Colonic mucosa (tissue), 4 donors: ENCODE measurements at regions of chr12 and their contacts with region 1.

Region 1: DNA sequence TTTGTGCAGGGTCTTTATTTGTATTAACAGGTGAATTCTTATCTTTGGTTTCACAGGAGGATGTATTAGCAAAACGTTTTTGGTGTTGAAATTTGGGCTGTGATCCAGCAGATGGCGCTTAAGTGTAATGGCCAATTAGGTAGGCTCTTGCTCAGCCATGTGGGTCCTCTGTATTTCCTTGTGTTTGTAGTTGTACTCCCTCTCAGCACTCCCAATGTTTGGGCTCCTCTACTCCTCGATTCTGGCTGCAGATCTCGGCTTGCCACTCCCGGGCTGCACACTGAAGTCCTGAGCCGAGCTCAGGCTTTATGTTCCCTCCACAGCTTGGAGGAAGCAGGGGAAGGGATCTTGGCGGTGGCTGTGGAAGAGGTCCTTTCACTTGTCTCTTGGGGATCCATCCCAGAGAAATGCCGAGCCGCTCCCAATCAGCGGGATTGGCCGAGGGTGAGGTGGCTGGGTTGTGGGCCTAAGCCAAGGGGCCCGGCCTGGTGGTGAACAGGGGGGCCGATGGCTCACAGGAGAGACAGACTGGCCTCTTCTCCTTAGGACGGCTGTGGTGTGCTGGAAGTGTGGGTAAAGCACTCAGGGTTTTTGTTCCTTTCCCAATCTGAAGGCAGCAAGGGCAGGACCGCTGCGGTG is 133.7 kb downstream of the AEBP2 start:
- DNase-seq: peak; percentile 34
- H3K4me3 ChIP-seq: no peak overlapping the region
- H3K27ac ChIP-seq: no peak overlapping the region
- H3K4me1 ChIP-seq: no peaks in the 10 kb centered on the region
- H3K27me3 ChIP-seq: no peaks in the 10 kb centered on the region
- CTCF ChIP-seq: peak; percentile 19

Region 2: GRCh38 chr12:19529951-19530635 is 42.9 kb before region 1 on chr12:
- intact Hi-C with region 1: no loop called
- DNase-seq: no peak
- H3K4me3 ChIP-seq: no peak overlapping the region
- H3K27ac ChIP-seq: no peak overlapping the region
- H3K4me1 ChIP-seq: no peaks in the 10 kb centered on the region
- H3K27me3 ChIP-seq: no peaks in the 10 kb centered on the region
- CTCF ChIP-seq: no peak

Region 3: DNA sequence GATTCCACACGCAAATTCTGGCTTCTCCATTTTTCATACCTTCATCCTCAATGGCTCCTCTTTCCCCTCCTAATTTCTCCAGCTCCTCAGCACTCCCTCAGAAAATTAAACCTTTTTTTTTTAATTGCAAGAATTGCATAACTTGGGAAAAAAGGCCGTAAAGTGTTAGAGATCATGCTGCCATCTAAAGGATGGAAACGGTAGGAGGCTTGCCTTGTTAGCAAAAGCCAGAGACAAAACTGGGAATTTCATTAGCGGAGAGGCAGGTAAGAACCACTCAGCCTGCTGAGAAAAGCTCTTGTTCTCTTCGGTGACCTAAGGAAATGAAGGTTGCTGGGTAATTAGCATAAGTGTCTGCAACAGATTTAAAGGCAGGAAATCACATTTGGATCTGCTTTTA is 70.6 kb after region 1 on chr12:
- intact Hi-C with region 1: loop called (anchors 5 kb)
- DNase-seq: no peak
- H3K4me3 ChIP-seq: no peak overlapping the region
- H3K27ac ChIP-seq: no peak overlapping the region
- H3K4me1 ChIP-seq: no peaks in the 10 kb centered on the region
- H3K27me3 ChIP-seq: no peaks in the 10 kb centered on the region
- CTCF ChIP-seq: no peak